Mammary epithelial cell (primary cell): ENCODE measurements at regions of chr1 and their contacts with region 1.

Region 1: GRCh38 chr1:199815947-199816346 is 211.6 kb upstream of the NR5A2 start:
- DNase-seq: no peak
- H3K4me3 ChIP-seq: no peak overlapping the region
- H3K27ac ChIP-seq: no peak overlapping the region
- H3K4me1 ChIP-seq: no peaks in the 10 kb centered on the region
- H3K27me3 ChIP-seq: no peaks in the 10 kb centered on the region
- CTCF ChIP-seq: no peak

Region 2: DNA sequence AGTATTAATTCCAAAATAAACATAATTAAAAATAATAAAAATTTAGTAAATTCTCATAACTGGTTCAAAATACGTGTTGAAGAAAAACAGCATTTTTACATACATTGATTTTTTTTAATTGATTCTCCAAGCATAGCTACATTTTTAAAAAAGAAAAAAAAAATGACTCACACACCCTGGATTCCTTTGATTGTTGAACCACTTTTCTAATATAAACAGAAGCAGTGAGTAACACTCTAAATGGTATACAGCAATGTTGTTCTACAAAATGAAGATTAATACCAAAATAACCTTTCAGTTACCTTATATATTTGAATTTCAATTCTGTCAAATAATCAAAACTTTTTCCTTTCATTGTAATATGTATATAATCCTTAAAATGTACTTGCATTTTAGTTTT is 35.0 kb before region 1 on chr1:
- CTCF ChIA-PET with region 1: no interaction called
- dilution Hi-C with region 1: loop called (anchors 5 kb)
- in situ Hi-C with region 1: no loop called
- intact Hi-C with region 1: no loop called
- DNase-seq: peak; percentile 15
- H3K4me3 ChIP-seq: no peak overlapping the region
- H3K27ac ChIP-seq: no peak overlapping the region
- H3K4me1 ChIP-seq: peaks cover 18% of the 10 kb centered on the region
- H3K27me3 ChIP-seq: no peaks in the 10 kb centered on the region
- CTCF ChIP-seq: no peak

Region 3: DNA sequence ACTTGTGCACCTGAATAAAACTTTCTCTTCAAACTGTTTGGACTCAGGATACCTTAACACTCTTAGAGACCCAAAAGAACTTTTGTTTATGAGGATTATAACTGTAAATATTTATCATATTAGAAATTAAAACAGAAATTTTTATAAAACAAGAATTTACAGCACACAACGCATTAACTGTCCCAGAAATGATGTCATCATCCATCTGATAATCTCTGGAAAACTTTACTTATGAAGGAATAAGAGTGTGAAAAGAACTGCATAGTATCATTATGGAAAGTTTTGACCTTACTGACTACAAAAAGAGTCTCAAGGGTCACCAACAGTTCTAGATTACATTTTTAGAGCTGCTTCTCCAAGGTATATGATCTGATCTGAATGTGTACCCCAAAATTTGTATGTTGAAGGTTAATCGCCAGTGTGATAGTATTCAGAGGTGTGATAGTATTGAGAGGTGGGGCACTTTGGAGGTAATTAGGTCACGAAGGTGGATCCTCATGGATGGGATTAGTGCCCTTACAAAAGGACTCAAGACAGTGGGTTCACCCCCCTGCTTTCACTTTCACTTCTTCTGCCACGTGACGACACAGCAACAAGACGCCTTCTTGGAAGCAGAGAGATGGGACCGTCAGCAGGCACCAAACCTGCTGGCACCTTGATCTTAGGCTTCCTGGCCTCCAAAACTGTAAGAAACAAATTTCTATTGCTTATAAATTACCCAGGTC is 115.9 kb after region 1 on chr1:
- CTCF ChIA-PET with region 1: no interaction called
- dilution Hi-C with region 1: no loop called
- in situ Hi-C with region 1: no loop called
- intact Hi-C with region 1: no loop called
- DNase-seq: no peak
- H3K4me3 ChIP-seq: no peak overlapping the region
- H3K27ac ChIP-seq: no peak overlapping the region
- H3K4me1 ChIP-seq: no peaks in the 10 kb centered on the region
- H3K27me3 ChIP-seq: peaks cover 2% of the 10 kb centered on the region
- CTCF ChIP-seq: no peak